OCI-LY7 (cell line): ENCODE measurements at regions of chrX and their contacts with region 1.

Region 1: GRCh38 chrX:16892504-16893362 is 22.6 kb upstream of the RBBP7 start:
- DNase-seq: peak; percentile 86
- H3K4me3 ChIP-seq: no peak overlapping the region
- H3K27ac ChIP-seq: no peak overlapping the region
- H3K4me1 ChIP-seq: peaks cover 8% of the 10 kb centered on the region
- CTCF ChIP-seq: peak; percentile 92

Region 2: DNA sequence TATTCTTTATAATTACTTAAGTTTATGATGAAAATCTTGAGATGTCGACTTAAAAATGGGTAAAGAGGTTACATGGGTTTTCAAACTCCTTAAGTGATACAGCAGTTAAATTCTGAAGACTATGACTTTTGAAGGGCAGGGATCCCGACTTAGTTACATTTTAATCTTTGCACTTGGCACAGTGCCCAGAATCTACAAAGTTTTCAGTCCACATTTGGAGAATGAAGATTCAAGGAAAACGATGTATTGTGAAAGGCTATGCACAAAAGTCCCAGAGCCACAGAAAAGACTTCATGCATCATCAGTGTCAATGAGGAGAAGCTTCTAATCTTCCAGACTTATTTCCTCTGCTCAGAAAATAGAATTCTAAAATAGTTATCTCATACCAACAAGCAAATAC is 805.7 kb before region 1 on chrX:
- CTCF ChIA-PET with region 1: no interaction called
- POLR2A ChIA-PET with region 1: no interaction called
- intact Hi-C with region 1: no loop called
- DNase-seq: no peak
- H3K4me3 ChIP-seq: no peak overlapping the region
- H3K27ac ChIP-seq: no peak overlapping the region
- H3K4me1 ChIP-seq: no peaks in the 10 kb centered on the region
- CTCF ChIP-seq: no peak

Region 3: DNA sequence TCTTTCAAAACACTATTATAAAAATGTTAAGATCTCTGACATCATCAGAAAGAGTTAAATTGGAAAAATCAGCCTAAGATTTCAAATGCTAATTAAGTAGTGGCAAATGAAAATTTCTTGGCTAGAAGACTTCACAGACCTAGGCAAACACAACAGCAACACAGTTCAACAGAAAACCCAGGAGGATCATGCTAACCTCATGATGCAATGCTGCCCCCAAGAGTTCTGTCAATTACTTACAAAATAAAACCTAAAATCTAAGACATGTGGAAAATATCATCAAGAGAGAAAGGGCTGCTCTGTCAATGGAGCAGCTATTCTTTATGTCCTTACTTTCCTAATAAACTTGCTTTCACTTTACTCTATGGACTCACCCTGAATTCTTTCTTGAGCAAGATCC is 221.7 kb before region 1 on chrX:
- CTCF ChIA-PET with region 1: no interaction called
- POLR2A ChIA-PET with region 1: no interaction called
- intact Hi-C with region 1: no loop called
- DNase-seq: peak; percentile 15
- H3K4me3 ChIP-seq: no peak overlapping the region
- H3K27ac ChIP-seq: no peak overlapping the region
- H3K4me1 ChIP-seq: no peaks in the 10 kb centered on the region
- CTCF ChIP-seq: peak; percentile 55

Region 4: DNA sequence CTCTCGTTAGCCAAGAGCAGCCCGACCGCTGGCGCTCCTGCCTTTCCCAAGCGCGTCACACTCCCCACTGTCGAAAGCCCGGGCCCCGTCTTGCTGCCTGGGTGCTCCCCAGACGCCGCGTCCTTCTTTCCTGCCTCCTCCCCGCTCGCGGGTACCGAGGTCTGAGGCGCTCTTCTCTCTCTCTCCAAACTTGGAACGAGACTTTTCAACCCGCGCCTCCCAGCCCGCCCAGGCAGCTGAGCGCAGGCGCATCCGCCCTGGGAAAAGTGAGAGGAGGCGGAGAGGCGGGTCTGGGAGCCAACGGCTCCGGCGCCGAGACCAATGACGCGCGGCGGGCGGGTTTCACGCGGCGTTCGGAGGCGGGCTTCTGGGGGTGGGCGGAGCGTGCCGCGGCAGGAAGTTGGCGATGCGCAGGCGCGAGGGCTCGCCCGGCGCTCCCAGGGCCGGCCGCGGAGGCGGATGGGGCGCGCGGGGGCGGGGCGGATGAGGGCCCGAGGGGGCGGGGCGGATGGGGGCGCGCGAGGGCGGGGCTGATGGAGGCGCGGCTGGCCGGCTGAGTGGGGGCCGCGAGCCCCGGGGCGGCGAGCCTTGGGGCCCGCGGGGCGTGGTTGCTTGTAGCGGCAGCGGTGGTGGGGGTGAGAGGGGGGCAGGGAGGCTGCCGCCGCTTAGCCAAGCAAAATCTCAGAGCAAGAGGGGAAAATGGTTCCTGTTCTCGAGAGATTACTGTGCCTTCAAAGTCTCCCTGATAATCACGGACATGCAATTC is 22.5 kb before region 1 on chrX and contains the start of gene RBBP7:
- CTCF ChIA-PET with region 1: no interaction called
- POLR2A ChIA-PET with region 1: interaction called, 5 read pairs
- intact Hi-C with region 1: loop called (anchors 1 kb)
- DNase-seq: peak; percentile 89
- H3K4me3 ChIP-seq: peak within 1 kb of the TSS; percentile 80
- H3K27ac ChIP-seq: peak within 1 kb of the TSS; percentile 97
- H3K4me1 ChIP-seq: peaks cover 61% of the 10 kb centered on the region
- CTCF ChIP-seq: no peak
- total RNA-seq, gene RBBP7: 144 and 161 TPM in 2 replicates